PC-9 (cell line): ENCODE measurements at regions of chr12 and their contacts with region 1.

Region 1: DNA sequence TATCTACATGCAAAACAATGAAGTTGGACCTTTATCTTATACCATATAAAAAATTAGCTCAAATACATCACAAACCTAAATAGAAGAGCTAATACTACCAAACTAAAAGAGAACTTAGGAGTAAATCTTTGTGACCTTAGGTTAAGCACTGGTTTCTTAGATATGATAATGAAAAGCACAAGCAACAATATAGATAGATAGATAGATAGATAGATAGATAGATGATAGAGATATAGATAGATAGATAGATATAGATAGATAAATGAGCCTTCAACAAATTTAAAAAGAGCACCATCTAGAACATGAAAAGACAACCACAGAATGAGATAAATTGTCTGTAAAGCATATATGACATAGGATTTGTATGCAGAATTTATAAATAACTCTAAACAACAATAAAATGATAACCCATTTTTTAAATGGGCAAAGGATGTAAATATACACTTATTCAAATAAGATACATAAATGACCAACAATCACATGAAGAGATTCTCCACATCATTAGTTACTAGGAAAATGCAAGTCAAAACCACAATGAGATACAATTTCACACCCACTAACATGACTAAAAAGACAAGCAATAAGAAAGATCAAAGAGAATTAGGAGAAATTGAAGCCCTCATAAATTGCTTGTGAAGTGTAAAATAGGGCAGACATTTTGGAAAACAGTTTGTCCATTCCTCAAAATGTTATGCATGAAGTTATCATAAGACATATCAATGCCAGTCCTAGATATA is 293.7 kb downstream of the BTG1 start:
- DNase-seq: no peak
- H3K4me3 ChIP-seq: no peak overlapping the region
- H3K27ac ChIP-seq: no peak overlapping the region
- H3K4me1 ChIP-seq: no peaks in the 10 kb centered on the region
- H3K27me3 ChIP-seq: no peaks in the 10 kb centered on the region
- CTCF ChIP-seq: no peak

Region 2: DNA sequence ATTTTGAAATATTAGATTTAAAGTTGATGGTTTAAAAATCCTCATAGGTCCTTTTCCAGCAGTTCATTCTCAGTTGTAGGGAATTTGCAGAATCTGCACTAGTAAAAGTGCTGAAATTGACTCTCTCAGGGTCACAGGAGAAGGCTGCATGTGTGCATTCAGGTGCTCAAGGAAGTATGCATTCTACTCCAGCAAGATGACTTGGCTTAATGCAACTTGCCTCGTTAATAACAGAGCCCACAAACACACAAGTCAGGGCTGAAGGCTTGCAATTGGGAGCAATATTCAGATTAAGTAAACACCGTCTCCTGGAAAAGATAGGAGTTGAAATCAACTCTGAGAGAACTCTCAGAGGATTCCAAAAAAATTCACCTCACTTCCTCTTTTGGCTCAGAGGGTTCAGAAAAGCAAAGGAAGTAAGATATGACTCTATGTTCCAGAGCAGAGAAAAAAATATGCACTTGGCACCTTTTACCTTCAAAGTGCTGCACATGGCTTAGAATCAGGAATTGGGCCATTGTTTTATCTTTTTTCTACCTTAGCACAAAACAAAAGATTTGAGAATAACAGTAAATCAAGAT is 262.9 kb before region 1 on chr12:
- CTCF ChIA-PET with region 1: no interaction called
- POLR2A ChIA-PET with region 1: no interaction called
- intact Hi-C with region 1: no loop called
- DNase-seq: no peak
- H3K4me3 ChIP-seq: no peak overlapping the region
- H3K27ac ChIP-seq: no peak overlapping the region
- H3K4me1 ChIP-seq: no peaks in the 10 kb centered on the region
- H3K27me3 ChIP-seq: no peaks in the 10 kb centered on the region
- CTCF ChIP-seq: no peak

Region 3: GRCh38 chr12:92034083-92034482 is 182.2 kb after region 1 on chr12:
- CTCF ChIA-PET with region 1: no interaction called
- POLR2A ChIA-PET with region 1: interaction called, 10 read pairs
- intact Hi-C with region 1: no loop called
- DNase-seq: no peak
- H3K4me3 ChIP-seq: no peak overlapping the region
- H3K27ac ChIP-seq: no peak overlapping the region
- H3K4me1 ChIP-seq: no peaks in the 10 kb centered on the region
- H3K27me3 ChIP-seq: no peaks in the 10 kb centered on the region
- CTCF ChIP-seq: no peak